Naive thymus-derived CD4-positive, alpha-beta T cell (primary cell): ENCODE measurements at regions of chr4 and their contacts with region 1.

Region 1: GRCh38 chr4:83074086-83074704 is 39.2 kb downstream of the COPS4 start:
- DNase-seq: peak in 8 of 9 donors; percentile 49 to 91 (median 85)
- ATAC-seq: peak; percentile 99
- H3K4me3 ChIP-seq: no peak overlapping the region
- H3K4me3 Mint-ChIP-seq: peak overlapping the region; percentile 43 to 85 (median 76)
- H3K27ac ChIP-seq: no peak overlapping the region
- H3K27ac Mint-ChIP-seq: peak overlapping the region; percentile 19 to 87 (median 79)
- H3K4me1 ChIP-seq: peaks cover 0 to 6% of the 10 kb centered on the region in 2 donors
- H3K4me1 Mint-ChIP-seq: peaks cover 8 to 28% (median 14%) of the 10 kb centered on the region in 7 donors
- H3K27me3 ChIP-seq: no peaks in the 10 kb centered on the region
- H3K27me3 Mint-ChIP-seq: no peaks in the 10 kb centered on the region

Region 2: DNA sequence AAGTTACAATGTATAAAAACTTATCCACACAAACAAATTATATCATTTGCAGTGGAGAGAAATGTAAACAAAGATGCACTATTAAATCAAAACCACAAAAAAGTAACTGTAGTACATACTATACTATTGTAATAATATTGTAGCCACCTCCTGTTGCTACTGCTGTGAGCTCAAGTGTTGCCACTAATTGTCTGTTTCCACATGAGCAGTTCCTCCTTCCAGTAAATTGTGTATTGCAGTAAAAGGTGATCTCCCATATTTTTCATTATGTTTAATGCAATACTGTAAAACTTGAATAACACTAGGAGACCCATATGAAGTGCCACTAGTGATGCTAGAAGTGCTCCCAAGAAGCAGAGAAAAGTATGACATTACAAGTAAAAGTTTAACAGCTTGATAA is 75.3 kb before region 1 on chr4:
- CTCF ChIA-PET with region 1: no interaction called
- POLR2A ChIA-PET with region 1: no interaction called
- intact Hi-C with region 1: no loop called
- DNase-seq: no peak
- ATAC-seq: no peak
- H3K4me3 ChIP-seq: no peak overlapping the region
- H3K4me3 Mint-ChIP-seq: no peak overlapping the region
- H3K27ac ChIP-seq: no peak overlapping the region
- H3K27ac Mint-ChIP-seq: no peak overlapping the region
- H3K4me1 ChIP-seq: no peaks in the 10 kb centered on the region
- H3K4me1 Mint-ChIP-seq: peaks cover 18 to 39% (median 23%) of the 10 kb centered on the region in 7 donors
- H3K27me3 ChIP-seq: no peaks in the 10 kb centered on the region
- H3K27me3 Mint-ChIP-seq: no peaks in the 10 kb centered on the region

Region 3: DNA sequence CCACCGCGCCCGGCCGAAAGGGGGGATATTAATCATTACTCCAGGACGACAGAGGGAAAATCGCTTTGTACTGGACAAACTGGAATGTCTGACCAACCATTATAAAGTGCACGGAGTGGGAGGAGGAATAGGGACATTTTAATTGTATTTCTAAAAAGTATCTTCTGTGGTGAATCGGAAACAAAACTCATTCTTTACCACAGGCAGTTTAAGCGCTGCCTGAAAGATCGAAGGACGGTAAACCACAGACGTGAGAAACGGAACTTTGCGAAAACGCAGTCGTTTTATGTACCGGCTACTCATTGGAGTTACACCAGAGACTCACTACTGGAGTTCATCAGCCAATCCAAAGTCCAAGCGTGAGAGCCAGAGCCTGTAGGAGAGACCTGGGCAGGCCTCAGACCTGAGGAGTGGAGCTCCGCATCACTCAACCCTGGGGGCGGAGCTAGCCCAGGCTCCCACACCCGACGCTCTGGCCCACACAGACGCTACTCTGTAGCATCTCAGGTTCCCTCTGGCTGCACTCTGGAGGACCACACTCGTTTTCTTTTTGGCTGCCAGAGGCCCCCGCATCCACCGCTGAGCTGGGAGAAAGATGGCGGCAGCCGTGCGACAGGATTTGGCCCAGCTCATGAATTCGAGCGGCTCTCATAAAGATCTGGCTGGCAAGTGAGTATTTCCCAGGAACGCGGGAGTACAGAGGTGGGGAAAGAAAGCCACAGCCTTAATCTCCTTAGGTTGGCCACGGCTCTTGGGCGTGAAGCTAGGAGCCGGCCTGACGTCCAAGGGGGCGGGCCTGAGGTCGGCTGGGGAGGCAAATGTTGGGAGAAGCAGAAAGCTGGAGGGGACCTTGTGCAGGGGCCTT is 39.3 kb before region 1 on chr4 and contains the start of gene COPS4:
- CTCF ChIA-PET with region 1: interaction called, 3 read pairs
- POLR2A ChIA-PET with region 1: interaction called, 3 read pairs
- intact Hi-C with region 1: loop called (anchors 2 kb)
- DNase-seq: peak; percentile 77 to 98 (median 97)
- ATAC-seq: peak; percentile 99
- H3K4me3 ChIP-seq: peak within 1 kb of the TSS; percentile 98
- H3K4me3 Mint-ChIP-seq: peak within 1 kb of the TSS; percentile 92 to 100 (median 98)
- H3K27ac ChIP-seq: peak within 1 kb of the TSS; percentile 94
- H3K27ac Mint-ChIP-seq: peak within 1 kb of the TSS; percentile 94 to 100 (median 97)
- H3K4me1 ChIP-seq: peaks cover 4 to 19% of the 10 kb centered on the region in 2 donors
- H3K4me1 Mint-ChIP-seq: peaks cover 19 to 44% (median 35%) of the 10 kb centered on the region in 7 donors
- H3K27me3 ChIP-seq: no peaks in the 10 kb centered on the region
- H3K27me3 Mint-ChIP-seq: no peaks in the 10 kb centered on the region
- total RNA-seq, gene COPS4: 23.5 to 32.8 (median 24.7) TPM

Region 4: DNA sequence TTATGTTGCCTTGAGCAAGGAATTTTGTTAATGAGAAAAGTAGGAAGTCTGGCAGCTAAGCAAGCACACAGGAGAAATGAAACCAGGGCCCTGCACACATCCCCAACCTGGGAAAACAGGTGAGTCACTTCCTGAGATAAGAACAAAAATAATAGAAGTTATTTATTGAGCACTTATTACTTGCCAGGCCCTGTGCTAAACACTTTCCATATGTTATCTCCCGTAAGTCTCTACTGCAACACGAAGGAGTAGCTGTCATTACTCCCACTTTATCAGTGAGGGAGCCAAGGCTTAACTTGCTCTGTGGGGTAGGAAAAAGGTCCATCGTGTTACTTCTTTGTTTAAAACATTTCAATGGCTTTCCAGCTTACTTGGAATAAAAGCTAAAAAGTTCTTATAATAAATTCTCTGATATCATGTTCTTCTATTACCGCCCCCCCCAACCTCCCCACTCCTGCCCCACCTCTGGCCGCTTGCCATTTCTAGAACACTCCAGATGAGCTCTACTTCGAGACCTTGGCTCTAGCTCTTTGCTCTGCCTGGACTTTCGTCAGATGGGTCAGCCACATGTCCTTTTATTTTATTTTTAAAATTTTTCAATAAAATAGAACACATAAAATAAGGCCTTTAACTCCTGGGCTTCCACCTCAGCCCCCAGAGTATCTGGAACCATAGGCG is 76.6 kb after region 1 on chr4:
- CTCF ChIA-PET with region 1: interaction called, 22 read pairs
- POLR2A ChIA-PET with region 1: no interaction called
- intact Hi-C with region 1: loop called in 1 of 2 experiments (anchors 1 kb)
- DNase-seq: no peak
- ATAC-seq: no peak
- H3K4me3 ChIP-seq: no peak overlapping the region
- H3K4me3 Mint-ChIP-seq: no peak overlapping the region
- H3K27ac ChIP-seq: no peak overlapping the region
- H3K27ac Mint-ChIP-seq: no peak overlapping the region
- H3K4me1 ChIP-seq: peaks cover 0 to 10% of the 10 kb centered on the region in 2 donors
- H3K4me1 Mint-ChIP-seq: peaks cover 9 to 44% (median 30%) of the 10 kb centered on the region in 7 donors
- H3K27me3 ChIP-seq: no peaks in the 10 kb centered on the region
- H3K27me3 Mint-ChIP-seq: peaks cover 0 to 17% (median 0%) of the 10 kb centered on the region in 5 donors

Region 5: GRCh38 chr4:83252782-83253405 is 178.7 kb after region 1 on chr4:
- CTCF ChIA-PET with region 1: interaction called, 42 read pairs
- POLR2A ChIA-PET with region 1: interaction called, 3 read pairs
- intact Hi-C with region 1: loop called (anchors 1 kb)
- DNase-seq: peak; percentile 36 to 85 (median 79)
- ATAC-seq: peak; percentile 90
- H3K4me3 ChIP-seq: no peak overlapping the region
- H3K4me3 Mint-ChIP-seq: no peak overlapping the region
- H3K27ac ChIP-seq: no peak overlapping the region
- H3K27ac Mint-ChIP-seq: peak overlapping the region in 8 of 9 donors; percentile 8 to 88 (median 72)
- H3K4me1 ChIP-seq: peaks cover 10 to 12% of the 10 kb centered on the region in 2 donors
- H3K4me1 Mint-ChIP-seq: peaks cover 19 to 36% (median 26%) of the 10 kb centered on the region in 7 donors
- H3K27me3 ChIP-seq: no peaks in the 10 kb centered on the region
- H3K27me3 Mint-ChIP-seq: peaks cover 0 to 5% (median 0%) of the 10 kb centered on the region in 5 donors

Region 6: DNA sequence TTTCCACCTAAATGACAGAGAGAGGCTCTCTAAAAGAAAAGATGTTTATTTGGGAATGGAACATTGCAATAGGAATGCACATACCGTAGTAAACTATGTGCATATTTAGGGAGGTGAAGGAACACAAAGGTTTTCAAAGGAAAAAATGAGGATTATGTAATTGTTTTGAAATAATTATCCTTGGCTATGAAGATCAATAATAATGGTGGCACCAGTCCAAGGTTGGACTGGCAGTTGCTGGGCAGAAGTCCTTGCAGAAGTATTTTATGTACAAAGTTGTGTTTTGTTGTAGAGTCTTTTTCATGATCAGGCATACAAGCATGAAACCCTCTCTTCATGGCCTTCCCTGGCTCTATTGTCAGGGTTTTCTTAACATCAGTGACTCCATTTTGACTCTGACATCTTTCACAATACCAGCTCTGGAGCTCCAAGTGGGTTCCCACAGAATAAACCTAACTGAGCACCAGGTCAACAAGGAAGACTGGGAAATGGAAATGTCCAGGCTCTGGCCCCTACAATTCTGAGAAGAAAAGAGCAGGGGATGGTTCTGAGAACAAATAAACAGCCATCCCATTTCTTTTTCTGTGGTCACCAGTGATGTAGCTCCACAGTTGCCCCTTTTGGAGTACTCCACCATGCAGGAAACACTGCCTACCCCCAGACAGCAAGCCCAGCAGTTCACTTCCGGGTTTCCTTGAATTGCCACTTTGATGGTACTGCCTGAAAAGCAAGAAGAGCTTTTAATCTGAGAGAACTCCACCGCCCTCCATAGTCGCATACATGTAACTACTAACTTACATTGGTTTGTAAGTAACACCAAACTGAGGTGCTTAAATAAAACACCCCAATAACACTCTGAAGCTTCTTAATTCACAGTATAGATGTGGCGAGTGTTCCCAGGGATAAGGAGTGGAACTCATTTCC is 313.8 kb after region 1 on chr4:
- CTCF ChIA-PET with region 1: no interaction called
- POLR2A ChIA-PET with region 1: no interaction called
- intact Hi-C with region 1: loop called (anchors 1 to 10 kb)
- DNase-seq: peak in 7 of 9 donors; percentile 31 to 60 (median 55)
- ATAC-seq: peak; percentile 73
- H3K4me3 ChIP-seq: no peak overlapping the region
- H3K4me3 Mint-ChIP-seq: peak overlapping the region in 2 of 10 donors; percentile 5 to 32
- H3K27ac ChIP-seq: no peak overlapping the region
- H3K27ac Mint-ChIP-seq: peak overlapping the region in 8 of 9 donors; percentile 15 to 84 (median 60)
- H3K4me1 ChIP-seq: peaks cover 0 to 11% of the 10 kb centered on the region in 2 donors
- H3K4me1 Mint-ChIP-seq: peaks cover 0 to 20% (median 11%) of the 10 kb centered on the region in 7 donors
- H3K27me3 ChIP-seq: no peaks in the 10 kb centered on the region
- H3K27me3 Mint-ChIP-seq: peaks cover 0 to 9% (median 0%) of the 10 kb centered on the region in 5 donors